HEK293 (cell line): ENCODE measurements at regions of chr17 and their contacts with region 1.

Region 1: GRCh38 chr17:68435876-68436842 is 21.1 kb downstream of the WIPI1 start:
- H3K4me3 ChIP-seq: no peak overlapping the region
- H3K27ac ChIP-seq: no peak overlapping the region
- H3K4me1 ChIP-seq: peaks cover 6% of the 10 kb centered on the region
- CTCF ChIP-seq: peak; percentile 79

Region 2: GRCh38 chr17:68418876-68419275 is 17.3 kb before region 1 on chr17:
- CTCF ChIA-PET with region 1: interaction called, 18 read pairs
- POLR2A ChIA-PET with region 1: interaction called, 3 read pairs
- H3K4me3 ChIP-seq: no peak overlapping the region
- H3K27ac ChIP-seq: no peak overlapping the region
- H3K4me1 ChIP-seq: no peaks in the 10 kb centered on the region
- CTCF ChIP-seq: no peak

Region 3: GRCh38 chr17:68424942-68425386 is 11.2 kb before region 1 on chr17:
- CTCF ChIA-PET with region 1: interaction called, 18 read pairs
- POLR2A ChIA-PET with region 1: no interaction called
- H3K4me3 ChIP-seq: no peak overlapping the region
- H3K27ac ChIP-seq: no peak overlapping the region
- H3K4me1 ChIP-seq: no peaks in the 10 kb centered on the region
- CTCF ChIP-seq: no peak